BJ (cell line): ENCODE measurements at regions of chr12 and their contacts with region 1.

Region 1: DNA sequence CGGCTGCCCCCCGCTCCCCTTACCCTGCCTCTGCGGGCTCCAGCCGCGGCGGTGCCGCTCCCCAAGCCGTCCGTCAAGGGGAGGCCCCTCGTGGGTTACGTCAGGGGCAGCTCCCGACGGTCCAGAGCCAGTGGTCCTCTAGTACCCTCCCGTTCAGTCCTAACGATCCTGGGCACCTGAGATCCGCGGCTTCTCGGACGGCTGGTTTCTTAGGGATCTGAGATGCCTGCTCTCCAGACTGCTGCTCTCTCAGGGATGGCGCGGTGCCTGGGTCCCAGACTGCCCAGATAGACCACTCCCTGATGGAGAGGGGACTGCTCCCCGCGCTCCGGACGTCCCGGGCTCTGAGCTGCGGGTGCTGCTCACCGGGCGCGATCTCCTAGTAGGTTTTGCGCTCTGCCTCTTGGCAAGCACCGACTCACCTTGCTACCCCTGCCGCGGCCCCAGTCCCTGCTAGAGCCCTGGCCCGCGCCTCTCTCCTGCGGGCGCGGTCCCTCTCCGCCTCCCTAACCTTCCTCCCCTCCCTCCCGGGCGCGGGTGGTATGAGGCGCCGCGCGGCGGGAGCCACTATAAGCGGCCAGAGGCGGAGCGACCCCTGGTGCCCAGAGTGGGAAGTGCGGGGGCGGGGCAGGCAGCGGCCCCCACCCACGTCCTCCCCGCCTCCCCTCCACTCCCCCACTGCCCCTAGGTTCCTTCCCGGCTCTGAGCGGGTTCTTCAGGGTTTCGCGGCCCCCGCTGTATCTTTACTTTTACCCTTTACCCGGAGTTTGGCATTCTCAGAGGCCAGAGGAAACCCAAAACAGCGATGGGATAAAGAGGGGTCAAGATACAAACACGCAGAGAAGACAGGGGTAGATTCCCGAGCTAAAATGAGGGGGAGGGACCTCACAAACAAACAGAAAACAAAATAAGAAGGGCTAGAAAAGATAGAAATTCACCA is at the start of gene C1QL4:
- DNase-seq: no peak
- H3K4me3 ChIP-seq: peak within 1 kb of the TSS; percentile 22
- H3K27me3 ChIP-seq: peaks cover 33% of the 10 kb centered on the region
- CTCF ChIP-seq: peak; percentile 97
- polyA plus RNA-seq, gene C1QL4: not detected in 2 replicates

Region 2: DNA sequence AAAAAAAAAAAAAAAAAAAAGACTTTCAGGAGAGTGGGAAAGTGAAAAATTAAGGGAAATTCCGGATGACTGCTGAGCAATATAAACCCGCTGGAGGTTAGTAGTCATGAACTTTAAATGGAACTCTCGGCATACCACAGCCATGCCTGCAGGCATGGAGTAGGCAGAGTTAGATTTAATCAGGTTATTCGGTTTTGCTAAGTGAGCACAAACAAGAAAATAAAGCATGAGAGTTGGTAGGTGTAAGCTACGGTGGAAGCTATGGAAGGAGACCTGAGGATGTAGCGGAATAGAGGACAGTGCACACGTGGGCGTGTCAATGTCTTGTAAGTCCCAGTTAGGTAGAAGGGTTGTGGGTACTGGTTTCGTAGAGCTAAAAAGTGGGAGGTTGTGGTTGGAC is 83.8 kb before region 1 on chr12:
- CTCF ChIA-PET with region 1: no interaction called
- POLR2A ChIA-PET with region 1: no interaction called
- DNase-seq: peak; percentile 43
- H3K4me3 ChIP-seq: no peak overlapping the region
- H3K27me3 ChIP-seq: no peaks in the 10 kb centered on the region
- CTCF ChIP-seq: no peak

Region 3: GRCh38 chr12:49322708-49323523 is 14.0 kb before region 1 on chr12 and contains the start of gene TROAP:
- CTCF ChIA-PET with region 1: interaction called, 23 read pairs
- POLR2A ChIA-PET with region 1: no interaction called
- DNase-seq: peak; percentile 91
- H3K4me3 ChIP-seq: peak within 1 kb of the TSS; percentile 57
- H3K27me3 ChIP-seq: no peaks in the 10 kb centered on the region
- CTCF ChIP-seq: no peak
- polyA plus RNA-seq, gene TROAP: 11.8 and 24.8 TPM in 2 replicates

Region 4: DNA sequence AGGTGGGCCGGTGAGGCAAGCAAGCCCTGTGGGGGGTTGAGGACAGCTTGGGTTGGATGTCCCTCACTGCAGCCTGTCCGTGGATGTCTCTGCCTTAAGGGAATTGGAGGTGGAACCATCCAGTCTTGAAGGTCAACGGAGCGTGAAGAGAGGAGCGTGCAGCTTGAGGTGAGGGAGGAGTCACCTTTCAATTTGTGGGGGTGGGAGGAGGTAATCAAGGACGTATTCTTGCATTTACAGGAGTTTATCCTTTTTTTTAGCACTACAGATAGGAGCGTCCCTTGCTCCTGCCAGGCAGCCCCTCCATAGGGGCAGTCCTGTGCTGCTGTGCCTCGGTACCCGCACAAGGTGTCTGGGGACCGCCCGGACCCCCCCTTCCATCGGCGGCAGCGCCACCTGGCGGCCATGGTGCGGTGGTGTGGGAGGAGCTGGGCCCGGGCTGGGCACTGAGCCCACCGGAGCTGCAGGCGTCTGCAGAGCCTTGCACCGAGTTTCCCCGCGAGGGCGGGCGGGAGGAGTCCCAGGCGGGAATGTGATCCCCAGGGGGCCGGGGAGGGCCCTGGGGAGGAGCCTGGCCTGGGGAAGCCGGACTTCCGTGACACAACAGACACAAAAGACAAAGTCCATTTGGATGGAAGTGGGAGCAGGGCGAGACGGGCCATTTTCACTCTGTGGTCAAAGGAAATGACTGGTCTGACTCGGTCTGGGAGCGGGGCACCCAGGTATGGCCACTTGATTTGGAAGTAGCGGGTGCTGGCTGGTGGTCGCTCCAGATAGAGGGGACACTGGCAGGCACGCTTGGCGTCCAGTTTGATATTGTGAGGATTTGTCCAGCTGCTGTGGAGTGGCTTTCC is 10.7 kb after region 1 on chr12:
- CTCF ChIA-PET with region 1: interaction called, 52 read pairs
- POLR2A ChIA-PET with region 1: no interaction called
- DNase-seq: no peak
- H3K4me3 ChIP-seq: peak overlapping the region; percentile 31
- H3K27me3 ChIP-seq: peaks cover 34% of the 10 kb centered on the region
- CTCF ChIP-seq: peak; percentile 95

Region 5: DNA sequence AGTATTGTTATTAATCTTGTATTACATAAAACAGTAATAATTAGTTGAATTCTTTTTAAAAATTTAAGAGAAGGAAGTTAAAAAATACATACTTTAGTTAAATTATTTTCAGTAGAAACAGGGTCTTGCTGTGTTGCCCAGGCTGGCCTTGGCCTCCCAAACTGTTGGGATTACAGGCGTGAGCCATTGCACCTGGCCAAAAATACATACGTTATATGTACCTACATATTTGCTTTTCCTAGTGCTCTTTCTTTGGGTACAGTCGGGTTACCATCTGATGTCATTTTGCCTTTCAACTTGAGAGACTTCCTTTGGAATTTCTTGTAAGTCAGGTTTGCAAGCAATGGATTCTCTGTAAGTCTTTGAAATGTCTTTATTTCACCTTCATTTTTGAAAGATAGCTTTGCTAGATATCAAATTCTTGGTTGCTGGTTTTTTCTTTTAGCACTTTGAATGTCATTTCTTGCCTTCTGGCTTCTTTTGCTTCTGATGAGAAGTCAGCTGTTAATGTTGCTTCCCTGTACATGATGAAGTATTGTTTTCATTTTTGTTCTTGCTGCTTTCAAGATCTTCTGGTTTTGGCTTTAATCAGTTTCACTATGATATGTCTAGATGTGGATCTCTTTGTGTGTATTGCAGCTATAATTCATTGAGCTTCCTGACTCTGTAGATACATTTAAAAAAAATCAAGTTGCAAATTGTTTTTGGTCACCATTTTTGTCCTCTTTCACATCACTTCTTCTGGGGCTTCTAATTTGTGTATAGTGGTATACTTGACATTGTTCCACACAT is 114.7 kb after region 1 on chr12:
- CTCF ChIA-PET with region 1: no interaction called
- POLR2A ChIA-PET with region 1: no interaction called
- DNase-seq: no peak
- H3K4me3 ChIP-seq: no peak overlapping the region
- H3K27me3 ChIP-seq: no peaks in the 10 kb centered on the region
- CTCF ChIP-seq: no peak